Activated CD4-positive, alpha-beta T cell treated with anti-CD3 and anti-CD28 coated beads, Interleukin-2, amount 10 ng/mL, durations not matched to agents 7 days and 5 days (primary cell): ENCODE measurements at regions of chr6 and their contacts with region 1.

Region 1: DNA sequence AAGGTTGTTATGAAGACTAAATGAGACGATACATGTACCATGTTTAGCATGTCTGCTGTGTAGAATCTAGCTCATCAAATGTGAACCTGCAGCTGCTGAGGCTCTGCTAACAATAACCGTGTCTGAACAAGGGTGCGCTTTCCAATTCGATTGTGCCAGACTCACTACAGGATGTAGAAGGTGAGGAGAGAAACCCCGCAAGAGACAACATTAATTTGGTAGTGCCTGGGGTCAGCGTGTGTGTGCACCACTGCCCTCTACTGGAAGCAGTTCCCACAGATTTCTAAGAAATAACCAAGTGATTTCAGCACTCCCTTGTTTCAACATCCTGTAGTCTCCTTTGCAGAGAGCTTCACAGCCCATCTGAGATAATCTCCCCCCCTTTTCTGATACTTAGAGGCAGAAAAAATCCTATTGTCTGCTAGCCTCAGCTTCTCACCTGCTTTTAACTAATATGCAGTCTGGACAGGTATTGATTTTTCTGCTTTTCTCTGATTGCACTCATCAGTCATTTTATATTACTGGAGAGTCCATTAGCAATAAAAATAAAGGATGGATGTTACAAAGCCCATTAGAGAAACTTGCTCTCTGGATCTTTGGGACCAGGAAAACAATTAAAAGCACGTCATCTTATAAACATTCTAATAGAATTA is 96.7 kb upstream of the BACH2 start:
- DNase-seq: peak; percentile 85
- H3K4me3 Mint-ChIP-seq: no peak overlapping the region
- H3K27ac Mint-ChIP-seq: peak overlapping the region; percentile 41
- H3K4me1 Mint-ChIP-seq: peaks cover 57% of the 10 kb centered on the region
- H3K27me3 Mint-ChIP-seq: peaks cover under 1% of the 10 kb centered on the region

Region 2: GRCh38 chr6:90370493-90370959 is 22.8 kb before region 1 on chr6:
- CTCF ChIA-PET with region 1: interaction called, 11 read pairs
- POLR2A ChIA-PET with region 1: no interaction called
- DNase-seq: no peak
- H3K4me3 Mint-ChIP-seq: no peak overlapping the region
- H3K27ac Mint-ChIP-seq: no peak overlapping the region
- H3K4me1 Mint-ChIP-seq: peaks cover 25% of the 10 kb centered on the region
- H3K27me3 Mint-ChIP-seq: no peaks in the 10 kb centered on the region

Region 3: GRCh38 chr6:90375681-90376439 is 17.5 kb before region 1 on chr6:
- CTCF ChIA-PET with region 1: interaction called, 12 read pairs
- POLR2A ChIA-PET with region 1: no interaction called
- DNase-seq: no peak
- H3K4me3 Mint-ChIP-seq: no peak overlapping the region
- H3K27ac Mint-ChIP-seq: no peak overlapping the region
- H3K4me1 Mint-ChIP-seq: peaks cover 2% of the 10 kb centered on the region
- H3K27me3 Mint-ChIP-seq: no peaks in the 10 kb centered on the region

Region 4: DNA sequence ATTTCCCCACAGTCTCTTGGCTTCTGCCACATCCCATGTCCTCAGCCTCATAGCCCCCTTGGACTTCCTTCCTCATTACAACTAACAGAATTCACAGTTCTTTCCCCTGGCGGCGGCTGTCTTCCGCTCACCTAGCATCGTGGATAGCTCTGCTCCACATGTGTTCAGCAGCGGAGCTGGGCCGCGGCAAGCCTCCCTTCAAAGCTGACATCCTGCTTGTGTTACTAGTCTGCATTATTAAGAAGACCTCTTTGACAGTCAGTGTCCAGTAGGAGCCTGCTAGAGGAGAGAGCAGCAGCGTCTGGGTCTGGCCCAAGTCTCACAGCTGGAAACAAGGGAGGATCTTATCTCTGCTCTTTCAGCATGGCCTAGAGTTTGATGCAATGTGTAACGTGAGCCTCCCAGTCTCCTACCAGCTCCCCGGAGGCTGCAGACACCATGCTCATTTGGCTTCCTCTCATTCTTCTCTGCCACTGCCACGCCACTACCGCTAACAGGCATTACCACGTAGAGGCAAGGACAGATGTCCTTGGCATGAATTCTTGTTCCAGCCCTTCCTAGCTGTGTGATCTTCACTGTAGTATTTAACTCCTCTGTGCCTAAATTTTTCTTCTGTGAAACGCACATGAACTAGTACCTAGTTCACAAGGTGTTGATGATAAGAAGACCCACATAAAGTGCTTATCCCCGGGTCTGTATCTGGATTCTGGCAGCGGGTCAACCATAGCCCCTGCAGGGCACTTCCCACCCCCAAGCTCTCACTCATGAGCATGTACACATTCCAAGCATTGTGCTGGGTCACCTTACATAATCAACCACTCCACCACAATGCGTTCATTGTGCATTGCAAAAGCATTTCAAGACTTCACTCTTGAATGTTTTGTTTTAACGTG is 10.4 kb after region 1 on chr6:
- CTCF ChIA-PET with region 1: interaction called, 16 read pairs
- POLR2A ChIA-PET with region 1: no interaction called
- DNase-seq: no peak
- H3K4me3 Mint-ChIP-seq: no peak overlapping the region
- H3K27ac Mint-ChIP-seq: peak overlapping the region; percentile 80
- H3K4me1 Mint-ChIP-seq: peaks cover 79% of the 10 kb centered on the region
- H3K27me3 Mint-ChIP-seq: no peaks in the 10 kb centered on the region

Region 5: GRCh38 chr6:90413867-90414266 is 20.5 kb after region 1 on chr6:
- CTCF ChIA-PET with region 1: interaction called, 13 read pairs
- POLR2A ChIA-PET with region 1: no interaction called
- DNase-seq: peak; percentile 79
- H3K4me3 Mint-ChIP-seq: peak overlapping the region; percentile 65
- H3K27ac Mint-ChIP-seq: peak overlapping the region; percentile 92
- H3K4me1 Mint-ChIP-seq: peaks cover 70% of the 10 kb centered on the region
- H3K27me3 Mint-ChIP-seq: peaks cover 2% of the 10 kb centered on the region

Region 6: GRCh38 chr6:90472744-90473143 is 79.4 kb after region 1 on chr6:
- CTCF ChIA-PET with region 1: interaction called, 42 read pairs
- POLR2A ChIA-PET with region 1: no interaction called
- DNase-seq: peak; percentile 74
- H3K4me3 Mint-ChIP-seq: peak overlapping the region; percentile 54
- H3K27ac Mint-ChIP-seq: peak overlapping the region; percentile 94
- H3K4me1 Mint-ChIP-seq: peaks cover 98% of the 10 kb centered on the region
- H3K27me3 Mint-ChIP-seq: peaks cover 3% of the 10 kb centered on the region

Region 7: DNA sequence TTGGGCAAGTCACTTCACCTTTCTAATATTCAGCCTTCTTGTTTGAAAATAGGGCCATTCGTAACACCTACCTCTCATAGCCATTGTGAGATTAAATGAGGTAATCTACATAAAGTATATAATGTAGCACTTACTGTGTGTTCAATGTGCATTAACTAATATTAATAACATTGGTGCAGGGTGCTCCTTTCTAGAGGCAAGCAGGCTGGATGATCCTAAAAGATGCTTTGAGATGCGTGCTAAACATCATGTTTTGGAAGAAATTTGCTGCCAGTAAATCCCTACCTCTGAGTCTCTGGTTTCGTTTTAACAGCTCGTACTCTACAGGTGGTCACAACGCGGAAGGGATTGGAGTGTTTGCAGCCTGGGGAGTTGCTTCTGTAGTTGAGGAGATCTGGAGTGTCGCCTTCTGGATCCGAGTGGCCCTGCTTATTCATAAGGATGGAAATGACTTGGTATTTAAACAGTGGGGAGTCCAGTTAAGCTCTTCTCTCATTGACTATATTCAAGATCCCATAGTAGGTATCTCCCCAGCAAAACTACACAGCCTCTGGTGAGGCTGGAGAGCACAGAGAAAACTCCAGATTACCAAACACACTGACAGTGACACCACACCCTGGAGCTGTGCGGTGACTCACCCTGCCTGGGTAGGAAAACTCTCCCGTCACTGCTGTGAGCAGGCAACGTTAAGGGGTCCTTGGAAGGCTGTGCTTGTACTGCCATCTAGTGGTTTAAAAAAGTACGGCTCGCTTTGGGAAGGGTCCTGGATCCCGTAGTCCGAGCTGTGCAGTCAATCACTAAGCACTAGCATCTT is 85.6 kb after region 1 on chr6:
- CTCF ChIA-PET with region 1: interaction called, 42 read pairs
- POLR2A ChIA-PET with region 1: no interaction called
- DNase-seq: peak; percentile 87
- H3K4me3 Mint-ChIP-seq: no peak overlapping the region
- H3K27ac Mint-ChIP-seq: peak overlapping the region; percentile 1
- H3K4me1 Mint-ChIP-seq: peaks cover 58% of the 10 kb centered on the region
- H3K27me3 Mint-ChIP-seq: no peaks in the 10 kb centered on the region